Activated B cell treated with CpG ODN at 0.5 μM for 24 hours (primary cell): ENCODE measurements at regions of chr14 and their contacts with region 1.

Region 1: GRCh38 chr14:95534299-95535225 is at the start of gene GLRX5:
- DNase-seq: peak; percentile 93
- ATAC-seq: peak; percentile 87
- H3K4me3 Mint-ChIP-seq: peak within 1 kb of the TSS; percentile 92
- H3K27ac Mint-ChIP-seq: peak within 1 kb of the TSS; percentile 93
- H3K4me1 Mint-ChIP-seq: peaks cover 50% of the 10 kb centered on the region
- H3K27me3 Mint-ChIP-seq: no peaks in the 10 kb centered on the region
- CTCF ChIP-seq: no peak
- total RNA-seq, gene GLRX5: 20.5 and 22.4 TPM in 2 replicates

Region 2: GRCh38 chr14:94173885-94174603 is 1360.5 kb before region 1 on chr14 and contains the start of gene PPP4R4:
- CTCF ChIA-PET with region 1: no interaction called
- POLR2A ChIA-PET with region 1: no interaction called
- intact Hi-C with region 1: loop called (anchors 10 kb)
- DNase-seq: peak; percentile 78
- ATAC-seq: peak; percentile 93
- H3K4me3 Mint-ChIP-seq: peak within 1 kb of the TSS; percentile 81
- H3K27ac Mint-ChIP-seq: no peak within 1 kb of the TSS
- H3K4me1 Mint-ChIP-seq: peaks cover 15% of the 10 kb centered on the region
- H3K27me3 Mint-ChIP-seq: peaks cover 43% of the 10 kb centered on the region
- CTCF ChIP-seq: no peak
- total RNA-seq, gene PPP4R4: 0.22 TPM in 1 of 2 replicates, not detected in the other

Region 3: GRCh38 chr14:95327558-95328374 is 206.8 kb before region 1 on chr14:
- CTCF ChIA-PET with region 1: no interaction called
- POLR2A ChIA-PET with region 1: no interaction called
- intact Hi-C with region 1: loop called (anchors 2 kb)
- DNase-seq: peak; percentile 48
- ATAC-seq: peak; percentile 84
- H3K4me3 Mint-ChIP-seq: peak overlapping the region; percentile 76
- H3K27ac Mint-ChIP-seq: peak overlapping the region; percentile 97
- H3K4me1 Mint-ChIP-seq: peaks cover 53% of the 10 kb centered on the region
- H3K27me3 Mint-ChIP-seq: no peaks in the 10 kb centered on the region
- CTCF ChIP-seq: no peak

Region 4: DNA sequence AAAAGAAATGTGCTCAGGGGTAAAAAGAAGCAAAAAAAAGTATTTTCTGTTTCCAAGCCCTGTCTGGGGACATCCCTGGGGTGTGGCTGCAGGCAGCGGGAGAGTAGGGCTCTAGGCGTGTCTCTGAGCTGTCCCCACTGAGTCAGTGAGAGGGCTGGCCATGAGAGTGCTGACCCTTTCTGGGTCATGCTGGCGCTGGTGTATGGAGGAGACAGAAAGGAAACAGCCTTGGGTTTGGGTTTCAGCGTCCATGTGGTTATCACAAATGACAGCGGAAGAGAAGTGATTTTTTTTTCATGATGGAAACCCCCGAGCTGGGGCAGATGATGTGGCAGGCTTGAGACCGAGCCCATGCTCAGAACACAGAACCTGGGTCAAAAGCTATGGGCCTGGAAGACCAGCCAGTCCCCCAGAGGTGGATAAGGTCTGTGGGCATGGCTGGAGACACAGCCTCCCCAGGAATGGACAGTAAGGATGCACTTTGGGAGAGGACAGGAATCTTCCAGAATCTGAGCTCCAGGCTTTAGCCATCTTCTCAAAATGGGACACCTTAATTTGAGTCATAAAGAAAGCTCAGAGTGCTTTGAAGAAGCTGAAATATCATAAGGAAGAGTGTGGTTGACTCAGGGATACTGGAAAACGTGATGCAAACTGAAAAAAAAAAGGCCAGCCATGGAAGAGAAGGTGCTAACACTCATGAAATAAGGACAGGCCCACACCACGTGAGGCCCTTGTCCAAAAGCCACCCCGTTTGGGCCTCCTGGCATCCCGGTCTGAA is 54.3 kb before region 1 on chr14:
- CTCF ChIA-PET with region 1: no interaction called
- POLR2A ChIA-PET with region 1: interaction called, 4 read pairs
- intact Hi-C with region 1: loop called (anchors 1 kb)
- DNase-seq: no peak
- ATAC-seq: peak; percentile 85
- H3K4me3 Mint-ChIP-seq: peak overlapping the region; percentile 52
- H3K27ac Mint-ChIP-seq: peak overlapping the region; percentile 90
- H3K4me1 Mint-ChIP-seq: peaks cover 53% of the 10 kb centered on the region
- H3K27me3 Mint-ChIP-seq: no peaks in the 10 kb centered on the region
- CTCF ChIP-seq: no peak

Region 5: GRCh38 chr14:95515596-95516552 is 18.7 kb before region 1 on chr14:
- CTCF ChIA-PET with region 1: interaction called, 3 read pairs
- POLR2A ChIA-PET with region 1: interaction called, 52 read pairs
- intact Hi-C with region 1: loop called (anchors 1 kb)
- DNase-seq: peak; percentile 89
- ATAC-seq: peak; percentile 85
- H3K4me3 Mint-ChIP-seq: peak overlapping the region; percentile 94
- H3K27ac Mint-ChIP-seq: peak overlapping the region; percentile 93
- H3K4me1 Mint-ChIP-seq: peaks cover 79% of the 10 kb centered on the region
- H3K27me3 Mint-ChIP-seq: no peaks in the 10 kb centered on the region
- CTCF ChIP-seq: no peak

Region 6: DNA sequence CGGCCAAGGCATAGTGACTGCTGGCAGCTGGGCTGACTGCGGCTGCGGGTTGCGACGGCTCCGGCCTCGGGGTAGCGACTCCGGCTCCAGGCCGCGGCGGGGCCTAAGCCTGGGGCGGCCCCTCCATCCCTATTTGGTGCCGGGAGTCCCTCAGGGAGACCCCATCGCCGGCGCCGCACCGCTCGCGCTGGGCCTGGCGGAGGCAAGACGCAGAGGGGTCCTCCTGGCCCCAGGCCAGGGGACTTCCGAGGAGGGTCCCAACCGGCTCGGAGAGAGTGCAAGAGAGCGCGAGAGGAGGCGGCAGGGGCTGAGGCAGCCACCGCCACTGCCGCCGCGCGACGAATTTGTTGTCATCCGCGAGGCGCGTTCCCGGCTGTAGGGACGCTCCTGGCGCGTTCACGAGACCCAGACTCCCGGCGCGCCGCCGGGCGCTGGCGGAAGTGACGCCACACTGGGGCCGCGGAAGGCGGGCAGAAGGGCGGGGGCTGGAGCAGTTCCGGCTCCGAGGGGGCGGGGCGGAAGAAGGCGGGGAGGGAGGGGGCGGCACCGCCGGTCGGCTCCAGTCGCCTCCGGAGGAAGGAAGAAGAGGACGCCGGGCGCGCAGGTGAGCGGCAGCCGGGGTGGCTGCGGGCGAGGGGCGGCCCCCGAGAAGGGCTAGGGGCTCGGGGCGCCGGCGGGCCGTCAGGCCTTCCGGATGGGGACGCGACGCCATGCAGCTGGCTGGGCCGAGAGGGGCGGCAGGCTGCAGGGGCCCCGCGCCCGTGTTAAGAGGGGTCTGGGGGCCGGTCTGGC is 828.6 kb after region 1 on chr14 and contains the starts of genes ATG2B and GSKIP:
- CTCF ChIA-PET with region 1: no interaction called
- POLR2A ChIA-PET with region 1: no interaction called
- intact Hi-C with region 1: loop called (anchors 1 kb)
- DNase-seq: peak; percentile 97
- ATAC-seq: peak; percentile 85
- H3K4me3 Mint-ChIP-seq: peak within 1 kb of the TSS; percentile 89
- H3K27ac Mint-ChIP-seq: peak within 1 kb of the TSS; percentile 63
- H3K4me1 Mint-ChIP-seq: peaks cover 40% of the 10 kb centered on the region
- H3K27me3 Mint-ChIP-seq: no peaks in the 10 kb centered on the region
- CTCF ChIP-seq: no peak
- total RNA-seq, gene ATG2B: 19.4 and 21.0 TPM in 2 replicates
- total RNA-seq, gene GSKIP: 11.4 and 15.3 TPM in 2 replicates

Region 7: GRCh38 chr14:96501742-96502617 is 967.4 kb after region 1 on chr14 and contains the start of gene PAPOLA:
- CTCF ChIA-PET with region 1: no interaction called
- POLR2A ChIA-PET with region 1: no interaction called
- intact Hi-C with region 1: loop called (anchors 1 kb)
- DNase-seq: peak; percentile 96
- ATAC-seq: peak; percentile 85
- H3K4me3 Mint-ChIP-seq: peak within 1 kb of the TSS; percentile 99
- H3K27ac Mint-ChIP-seq: peak within 1 kb of the TSS; percentile 97
- H3K4me1 Mint-ChIP-seq: peaks cover 64% of the 10 kb centered on the region
- H3K27me3 Mint-ChIP-seq: no peaks in the 10 kb centered on the region
- CTCF ChIP-seq: no peak
- total RNA-seq, gene PAPOLA: 205 and 255 TPM in 2 replicates

Region 8: GRCh38 chr14:96514694-96515093 is 980.1 kb after region 1 on chr14:
- CTCF ChIA-PET with region 1: no interaction called
- POLR2A ChIA-PET with region 1: no interaction called
- intact Hi-C with region 1: no loop called
- DNase-seq: no peak
- ATAC-seq: peak; percentile 41
- H3K4me3 Mint-ChIP-seq: peak overlapping the region; percentile 61
- H3K27ac Mint-ChIP-seq: peak overlapping the region; percentile 82
- H3K4me1 Mint-ChIP-seq: peaks cover 84% of the 10 kb centered on the region
- H3K27me3 Mint-ChIP-seq: no peaks in the 10 kb centered on the region
- CTCF ChIP-seq: no peak